ENCODE measurements at regions of chr3 and their contacts with region 1.

Region 1: DNA sequence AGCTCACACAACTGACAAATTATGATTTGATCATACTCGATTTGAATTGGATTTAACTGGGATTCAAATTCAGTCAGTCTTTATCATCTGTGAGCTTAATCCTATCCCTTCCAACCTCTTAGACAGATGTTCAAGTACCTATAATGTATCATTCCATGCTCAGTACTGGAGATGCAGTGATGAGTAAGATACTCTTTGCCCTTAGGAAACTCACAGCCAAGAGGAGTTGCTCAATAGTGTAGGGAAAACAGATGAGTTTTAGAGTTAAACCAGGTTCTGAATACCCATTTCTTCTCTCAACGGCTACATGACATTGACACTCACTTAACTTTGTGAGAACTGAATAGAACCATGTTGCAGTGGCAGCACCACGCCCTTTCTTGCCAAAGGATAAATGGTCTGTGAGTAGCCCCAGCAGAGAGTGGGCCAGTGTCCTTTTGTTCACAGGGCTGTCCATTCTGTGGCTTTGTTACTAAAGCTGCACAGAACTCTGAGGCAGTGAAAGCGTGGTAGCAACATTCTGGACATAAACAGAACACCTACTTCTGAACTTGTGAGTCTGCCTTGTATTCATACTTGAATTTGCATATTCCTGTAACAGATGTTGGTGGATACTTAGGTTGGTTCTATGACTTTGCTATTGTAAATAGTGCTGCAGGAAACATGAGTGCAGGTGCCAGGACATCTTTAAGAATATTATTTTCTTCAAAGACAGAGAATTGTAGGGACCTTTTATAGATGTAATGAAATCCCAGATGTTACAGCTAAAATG is 91.6 kb downstream of the RASA2 start:
- DNase-seq: no peak
- H3K4me3 Mint-ChIP-seq: no peak overlapping the region
- H3K27ac Mint-ChIP-seq: peak overlapping the region; percentile 46
- H3K4me1 Mint-ChIP-seq: peaks cover 7% of the 10 kb centered on the region
- H3K27me3 Mint-ChIP-seq: no peaks in the 10 kb centered on the region

Region 2: GRCh38 chr3:141460097-141460704 is 118.2 kb before region 1 on chr3:
- CTCF ChIA-PET with region 1: no interaction called
- POLR2A ChIA-PET with region 1: interaction called, 10 read pairs
- DNase-seq: peak; percentile 92
- H3K4me3 Mint-ChIP-seq: no peak overlapping the region
- H3K27ac Mint-ChIP-seq: no peak overlapping the region
- H3K4me1 Mint-ChIP-seq: peaks cover 15% of the 10 kb centered on the region
- H3K27me3 Mint-ChIP-seq: no peaks in the 10 kb centered on the region

Region 3: GRCh38 chr3:141471160-141471559 is 107.2 kb before region 1 on chr3:
- CTCF ChIA-PET with region 1: no interaction called
- POLR2A ChIA-PET with region 1: no interaction called
- DNase-seq: no peak
- H3K4me3 Mint-ChIP-seq: no peak overlapping the region
- H3K27ac Mint-ChIP-seq: no peak overlapping the region
- H3K4me1 Mint-ChIP-seq: peaks cover 21% of the 10 kb centered on the region
- H3K27me3 Mint-ChIP-seq: peaks cover 7% of the 10 kb centered on the region

Region 4: GRCh38 chr3:141754032-141754431 is 175.6 kb after region 1 on chr3:
- CTCF ChIA-PET with region 1: no interaction called
- POLR2A ChIA-PET with region 1: no interaction called
- DNase-seq: no peak
- H3K4me3 Mint-ChIP-seq: no peak overlapping the region
- H3K27ac Mint-ChIP-seq: no peak overlapping the region
- H3K4me1 Mint-ChIP-seq: no peaks in the 10 kb centered on the region
- H3K27me3 Mint-ChIP-seq: no peaks in the 10 kb centered on the region